Right lobe of liver (tissue), 6 donors: ENCODE measurements at regions of chr12 and their contacts with region 1.

Region 1: DNA sequence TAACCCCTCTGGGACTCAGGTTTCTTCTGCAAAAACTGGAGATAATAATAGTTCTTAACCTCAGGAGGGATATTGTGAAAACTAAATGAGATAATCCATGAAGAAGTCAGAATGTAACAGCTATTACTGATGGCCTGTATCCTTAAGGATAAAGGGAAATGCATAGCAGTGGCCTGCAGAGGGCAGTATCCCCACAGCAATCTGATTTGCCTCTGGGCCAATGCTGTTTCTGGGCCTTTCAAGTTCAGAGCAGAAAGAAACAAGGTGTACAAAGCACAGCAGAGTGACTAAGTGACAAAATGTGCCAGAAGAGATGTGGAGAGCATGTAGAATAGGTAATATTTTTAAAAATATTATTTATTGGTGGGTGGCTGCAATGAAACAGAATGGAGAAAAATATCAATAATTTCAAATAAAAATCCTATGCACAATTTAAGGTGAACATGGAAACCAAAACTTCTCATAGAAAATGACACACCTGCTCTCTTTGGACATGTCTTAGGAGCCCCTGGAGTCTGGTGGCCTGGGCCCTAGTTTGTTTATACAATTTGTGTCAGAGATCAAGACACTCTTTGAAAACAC is 90.3 kb downstream of the C12orf75 start:
- DNase-seq: peak; percentile 65 to 77 (median 71)
- ATAC-seq: peak; percentile 97 to 99 (median 98)
- H3K4me3 ChIP-seq: no peak overlapping the region
- H3K27ac ChIP-seq: no peak overlapping the region
- H3K4me1 ChIP-seq: no peaks in the 10 kb centered on the region
- H3K27me3 ChIP-seq: no peaks in the 10 kb centered on the region
- CTCF ChIP-seq: peak; percentile 86 to 96 (median 94)
- POLR2A ChIP-seq: no peak

Region 2: DNA sequence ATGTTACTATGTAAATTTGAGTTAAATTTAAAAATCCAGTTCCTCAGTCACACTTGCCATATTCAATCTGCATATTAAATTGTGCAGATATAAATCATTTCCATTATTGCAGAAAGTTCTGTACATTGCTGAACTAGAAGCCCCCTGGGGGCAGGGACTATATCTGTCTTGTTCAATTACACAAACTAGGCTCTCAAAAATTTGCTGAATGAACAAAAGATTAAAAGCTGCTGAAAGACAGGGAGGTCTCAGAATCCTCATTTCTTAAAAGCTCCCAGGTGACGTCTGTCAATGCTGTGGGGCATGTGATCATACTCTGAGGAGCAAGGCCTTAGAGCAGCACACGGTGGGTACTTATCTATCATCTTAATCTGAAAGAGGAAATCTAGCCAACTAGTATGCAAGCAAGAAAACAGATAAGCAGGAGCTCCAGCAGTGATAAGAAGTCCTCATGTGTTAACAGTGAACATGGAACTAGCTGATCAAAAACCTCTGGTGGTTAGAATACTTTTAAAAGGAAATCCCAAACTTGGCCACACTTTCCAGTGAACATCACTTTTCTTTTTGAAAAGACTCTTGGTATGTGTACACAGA is 245.3 kb before region 1 on chr12:
- intact Hi-C with region 1: no loop called
- DNase-seq: no peak
- ATAC-seq: no peak
- H3K4me3 ChIP-seq: no peak overlapping the region
- H3K27ac ChIP-seq: no peak overlapping the region
- H3K4me1 ChIP-seq: peaks cover 0 to 8% (median 0%) of the 10 kb centered on the region in 4 donors
- H3K27me3 ChIP-seq: no peaks in the 10 kb centered on the region
- CTCF ChIP-seq: no peak
- POLR2A ChIP-seq: no peak

Region 3: DNA sequence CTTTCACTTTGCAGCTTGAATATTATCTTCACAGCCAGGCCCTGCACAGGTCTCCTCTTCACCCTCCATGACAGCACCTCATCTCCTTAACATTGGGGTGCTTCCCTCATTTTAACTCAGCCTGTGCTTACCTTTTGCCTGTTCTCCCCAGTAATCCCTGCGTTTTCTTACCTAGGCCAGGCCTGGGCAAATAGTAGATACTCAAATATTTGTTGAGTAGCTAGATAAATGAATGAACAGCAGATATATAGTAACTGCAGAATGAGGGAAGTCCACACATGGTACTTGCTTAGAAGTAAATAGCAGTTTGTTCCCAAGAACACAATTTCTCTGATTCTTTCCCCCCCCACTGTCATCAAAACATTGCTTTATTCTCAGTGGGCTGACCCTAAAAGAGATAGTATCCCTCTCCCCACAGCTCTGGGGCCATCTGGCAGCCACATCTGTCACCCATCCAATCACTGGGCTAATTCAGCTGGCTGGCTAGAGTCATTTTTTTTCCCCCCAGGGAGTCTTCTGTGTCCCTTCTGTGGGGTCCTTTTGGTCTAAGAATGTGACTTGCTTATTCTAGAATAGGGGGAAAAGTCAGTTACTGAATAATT is 228.0 kb before region 1 on chr12:
- intact Hi-C with region 1: no loop called
- DNase-seq: no peak
- ATAC-seq: peak; percentile 22 to 51 (median 32)
- H3K4me3 ChIP-seq: no peak overlapping the region
- H3K27ac ChIP-seq: no peak overlapping the region
- H3K4me1 ChIP-seq: peaks cover 0 to 23% (median 0%) of the 10 kb centered on the region in 4 donors
- H3K27me3 ChIP-seq: no peaks in the 10 kb centered on the region
- CTCF ChIP-seq: no peak
- POLR2A ChIP-seq: no peak

Region 4: GRCh38 chr12:106205208-106206071 is 784.7 kb after region 1 on chr12:
- intact Hi-C with region 1: loop called in 1 of 2 experiments (anchors 10 kb)
- DNase-seq: peak; percentile 70 to 83 (median 83)
- ATAC-seq: peak; percentile 100
- H3K4me3 ChIP-seq: no peak overlapping the region
- H3K27ac ChIP-seq: no peak overlapping the region
- H3K4me1 ChIP-seq: no peaks in the 10 kb centered on the region
- H3K27me3 ChIP-seq: no peaks in the 10 kb centered on the region
- CTCF ChIP-seq: peak; percentile 53 to 70 (median 64)
- POLR2A ChIP-seq: no peak

Region 5: DNA sequence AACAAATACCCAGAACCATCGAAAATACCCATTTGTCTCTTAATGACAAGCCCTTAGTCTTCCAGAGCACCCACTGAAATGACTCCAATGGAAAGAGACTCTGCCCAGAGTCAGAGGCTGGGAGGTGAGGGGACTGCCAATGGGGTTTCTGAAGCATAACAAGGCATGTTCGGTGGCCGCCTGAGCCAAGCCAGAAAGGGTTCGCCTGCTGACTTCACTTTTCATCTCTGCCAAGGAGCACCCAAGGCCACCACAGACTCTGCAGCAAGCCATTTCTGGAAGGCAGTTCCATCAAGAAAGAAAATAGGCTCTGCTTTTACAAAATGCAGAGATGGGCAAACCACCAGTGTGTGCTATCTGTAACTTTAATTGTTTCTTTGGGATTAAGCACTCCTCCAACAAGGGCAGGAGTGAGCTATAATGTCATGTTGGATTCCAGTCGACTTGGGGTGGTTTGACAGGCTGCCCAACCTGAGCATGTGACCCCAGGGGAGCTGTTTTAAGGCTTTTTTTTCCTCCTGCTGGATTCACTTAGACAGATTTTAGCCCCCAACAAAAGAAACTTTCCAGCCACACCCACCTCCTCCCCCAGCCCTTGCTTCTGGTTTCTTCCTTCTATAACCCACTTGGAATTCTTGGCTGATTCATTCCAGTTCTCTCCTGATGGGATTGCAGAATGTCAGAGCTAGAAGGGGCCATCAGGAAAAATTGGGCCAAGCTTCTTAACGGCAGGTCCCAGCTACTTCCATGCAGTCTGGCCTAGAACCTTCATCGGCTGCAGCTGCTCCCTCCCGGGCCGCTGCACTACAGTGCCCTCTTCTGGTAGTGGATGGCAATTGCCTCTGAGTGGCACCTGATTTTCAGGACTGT is 803.0 kb after region 1 on chr12:
- intact Hi-C with region 1: loop called in 1 of 2 experiments (anchors 5 kb)
- DNase-seq: peak in 2 of 3 donors; percentile 59 to 75
- ATAC-seq: peak; percentile 81 to 94 (median 90)
- H3K4me3 ChIP-seq: no peak overlapping the region
- H3K27ac ChIP-seq: no peak overlapping the region
- H3K4me1 ChIP-seq: peaks cover 0 to 8% (median 0%) of the 10 kb centered on the region in 4 donors
- H3K27me3 ChIP-seq: no peaks in the 10 kb centered on the region
- CTCF ChIP-seq: peak; percentile 88 to 99 (median 96)
- POLR2A ChIP-seq: no peak